ENCODE measurements at regions of chr1 and their contacts with region 1.

Region 1: DNA sequence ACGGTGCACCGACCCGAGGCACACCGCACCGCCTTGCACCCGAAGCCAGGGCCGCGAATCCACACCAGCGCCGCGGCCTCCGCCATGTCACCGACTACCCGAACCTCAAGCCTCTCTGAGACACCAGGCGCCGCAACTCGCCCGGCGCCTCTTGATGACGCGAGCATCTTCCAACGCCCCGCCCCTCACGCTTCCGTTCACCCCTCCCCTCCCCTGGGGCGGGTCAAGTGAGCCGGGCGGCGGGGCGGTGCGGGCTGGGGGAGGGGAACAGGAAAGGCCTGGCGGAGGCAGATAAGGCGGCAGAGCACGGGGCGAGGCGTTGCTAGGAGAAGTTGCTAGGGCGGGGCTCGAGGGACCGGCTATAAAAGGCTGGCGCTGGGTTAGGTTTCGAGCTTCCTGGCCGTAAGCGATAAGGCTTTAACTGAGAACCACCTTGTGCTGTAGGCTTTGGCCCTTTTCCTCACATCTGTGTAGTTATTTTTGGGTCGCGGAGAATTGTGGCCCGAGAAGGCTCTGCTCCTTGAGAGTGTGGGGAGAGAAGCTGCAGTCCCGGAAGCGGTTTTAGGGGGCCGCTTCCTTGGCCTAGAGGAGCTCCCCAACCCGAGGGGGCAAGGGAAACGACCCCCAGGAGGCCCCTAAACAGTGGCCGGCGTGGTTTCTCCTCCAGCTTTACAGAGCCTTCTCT is at the start of gene SDE2:
- DNase-seq: peak; percentile 95
- ATAC-seq: peak; percentile 83
- H3K4me3 ChIP-seq: peak within 1 kb of the TSS; percentile 96
- H3K27ac ChIP-seq: peak within 1 kb of the TSS; percentile 97
- H3K4me1 ChIP-seq: peaks cover 39% of the 10 kb centered on the region
- H3K27me3 ChIP-seq: no peaks in the 10 kb centered on the region
- CTCF ChIP-seq: no peak
- EP300 ChIP-seq: no peak; a peak in 1 of 4 replicates
- POLR2A ChIP-seq: peak; percentile 100
- RAD21 ChIP-seq: no peak
- polyA plus RNA-seq, gene SDE2: 2.7 to 4.3 TPM

Region 2: DNA sequence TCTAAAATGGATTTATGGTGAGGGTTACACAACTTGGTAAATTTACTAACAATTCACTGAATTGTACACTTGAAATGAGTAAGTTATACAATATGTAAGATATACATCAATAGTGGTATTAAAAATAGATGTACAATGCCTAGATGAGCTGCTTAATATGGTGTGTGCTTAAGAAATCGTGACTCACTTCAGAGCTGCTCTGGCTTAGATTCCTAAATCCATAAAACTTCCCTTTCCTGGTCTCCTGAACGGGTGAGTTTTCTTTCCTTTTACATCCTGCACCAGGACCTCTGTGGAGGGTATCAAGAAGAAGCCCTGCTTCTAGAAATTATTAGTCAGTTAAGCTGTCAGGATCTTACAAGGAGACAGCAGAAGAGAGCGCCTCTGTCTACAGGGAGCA is 93.6 kb after region 1 on chr1:
- CTCF ChIA-PET with region 1: no interaction called
- POLR2A ChIA-PET with region 1: no interaction called
- RAD21 ChIA-PET with region 1: no interaction called
- SMC1A ChIA-PET with region 1: no interaction called
- in situ Hi-C with region 1: no loop called
- intact Hi-C with region 1: no loop called
- DNase-seq: no peak
- ATAC-seq: no peak
- H3K4me3 ChIP-seq: no peak overlapping the region
- H3K27ac ChIP-seq: no peak overlapping the region
- H3K4me1 ChIP-seq: no peaks in the 10 kb centered on the region
- H3K27me3 ChIP-seq: no peaks in the 10 kb centered on the region
- CTCF ChIP-seq: no peak
- EP300 ChIP-seq: no peak
- POLR2A ChIP-seq: no peak
- RAD21 ChIP-seq: no peak

Region 3: DNA sequence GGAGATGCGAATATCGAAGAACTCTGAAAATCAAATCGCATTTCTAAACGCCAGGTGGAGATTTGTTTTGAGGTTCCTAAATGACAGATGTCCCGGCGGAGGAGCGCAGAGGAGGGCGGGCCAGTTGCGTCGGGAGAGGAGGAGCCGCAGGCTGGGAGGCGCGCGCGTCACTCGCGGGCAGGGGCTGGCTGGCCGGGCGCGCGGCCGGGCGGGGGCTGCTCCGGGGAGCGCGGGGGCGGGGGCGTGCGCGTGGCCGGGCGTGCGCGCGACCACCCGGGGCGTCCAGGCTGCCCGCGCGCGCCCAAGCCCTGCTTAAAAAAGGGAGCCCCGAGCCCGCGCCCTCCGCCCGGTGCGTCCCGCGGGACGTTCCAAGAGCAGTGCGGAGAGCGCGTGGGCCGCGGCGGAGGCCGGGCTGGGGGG is 110.5 kb after region 1 on chr1:
- CTCF ChIA-PET with region 1: interaction called, 3 read pairs
- POLR2A ChIA-PET with region 1: interaction called, 15 read pairs
- RAD21 ChIA-PET with region 1: interaction called, 8 read pairs
- SMC1A ChIA-PET with region 1: interaction called, 5 read pairs
- in situ Hi-C with region 1: no loop called
- intact Hi-C with region 1: no loop called
- DNase-seq: no peak
- ATAC-seq: peak; percentile 71
- H3K4me3 ChIP-seq: peak overlapping the region; percentile 77
- H3K27ac ChIP-seq: peak overlapping the region; percentile 92
- H3K4me1 ChIP-seq: peaks cover 23% of the 10 kb centered on the region
- H3K27me3 ChIP-seq: no peaks in the 10 kb centered on the region
- CTCF ChIP-seq: peak in 2 of 3 experiments; percentile 12 to 20; a peak in 1 of 6 replicates
- EP300 ChIP-seq: no peak
- POLR2A ChIP-seq: 0 out of 2 replicates have a peak, but pooled peaks have one; percentile 13
- RAD21 ChIP-seq: peak; percentile 25; the same call in 1 of the 2 replicates

Measured in GM12878 (cell line).